Heart left ventricle (tissue), 16 donors: ENCODE measurements at regions of chr15 and their contacts with region 1.

Region 1: DNA sequence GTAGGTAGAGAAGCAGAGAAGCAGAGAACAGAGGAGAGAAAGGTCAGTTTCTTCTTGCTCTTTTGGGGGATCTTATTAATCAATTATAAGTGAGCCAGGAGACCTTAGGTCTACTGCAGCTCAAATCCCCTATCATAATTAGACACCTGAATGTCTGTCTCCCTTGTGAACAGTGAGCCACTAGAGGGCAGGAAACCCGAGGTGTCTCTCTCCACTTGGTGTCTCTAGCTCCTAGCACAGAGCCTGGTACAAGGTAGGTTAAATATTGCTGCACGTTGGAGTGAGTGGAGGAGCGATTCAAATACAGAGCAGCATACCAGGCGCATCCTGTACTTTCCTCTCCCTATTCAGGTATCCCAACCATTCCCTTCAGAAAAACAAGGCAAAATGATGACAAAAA is 2.0 kb upstream of the ST8SIA2 start:
- DNase-seq: no peak
- ATAC-seq: peak in 3 of 4 donors; percentile 47 to 64 (median 60)
- H3K4me3 ChIP-seq: no peak overlapping the region
- H3K27ac ChIP-seq: no peak overlapping the region
- H3K4me1 ChIP-seq: peaks cover 0 to 24% (median 0%) of the 10 kb centered on the region in 12 donors
- H3K27me3 ChIP-seq: peaks cover 9 to 76% (median 25%) of the 10 kb centered on the region in 9 donors
- CTCF ChIP-seq: peak; percentile 8 to 54 (median 34)
- POLR2A ChIP-seq: no peak

Region 2: GRCh38 chr15:92217896-92218295 is 173.7 kb before region 1 on chr15:
- intact Hi-C with region 1: no loop called
- DNase-seq: no peak
- ATAC-seq: no peak
- H3K4me3 ChIP-seq: no peak overlapping the region
- H3K27ac ChIP-seq: no peak overlapping the region
- H3K4me1 ChIP-seq: no peaks in the 10 kb centered on the region
- H3K27me3 ChIP-seq: no peaks in the 10 kb centered on the region
- CTCF ChIP-seq: no peak
- POLR2A ChIP-seq: no peak

Region 3: GRCh38 chr15:92277776-92278175 is 113.9 kb before region 1 on chr15:
- intact Hi-C with region 1: loop called in 1 of 10 experiments (anchors 5 kb)
- DNase-seq: peak in 1 of 5 donors; percentile 19
- ATAC-seq: peak in 3 of 4 donors; percentile 57 to 77 (median 58)
- H3K4me3 ChIP-seq: no peak overlapping the region
- H3K27ac ChIP-seq: no peak overlapping the region
- H3K4me1 ChIP-seq: no peaks in the 10 kb centered on the region
- H3K27me3 ChIP-seq: no peaks in the 10 kb centered on the region
- CTCF ChIP-seq: peak; percentile 13 to 51 (median 36)
- POLR2A ChIP-seq: no peak

Region 4: GRCh38 chr15:92346063-92346462 is 45.6 kb before region 1 on chr15:
- intact Hi-C with region 1: loop called in 1 of 10 experiments (anchors 5 kb)
- DNase-seq: no peak
- ATAC-seq: no peak
- H3K4me3 ChIP-seq: no peak overlapping the region
- H3K27ac ChIP-seq: no peak overlapping the region
- H3K4me1 ChIP-seq: peaks cover 0 to 28% (median 2%) of the 10 kb centered on the region in 12 donors
- H3K27me3 ChIP-seq: peaks cover 0 to 22% (median 0%) of the 10 kb centered on the region in 9 donors
- CTCF ChIP-seq: no peak
- POLR2A ChIP-seq: no peak

Region 5: GRCh38 chr15:92714477-92715401 is 323.1 kb after region 1 on chr15:
- intact Hi-C with region 1: loop called in 2 of 10 experiments (anchors 5 to 10 kb)
- DNase-seq: peak; percentile 69 to 78 (median 75)
- ATAC-seq: peak; percentile 73 to 92 (median 88)
- H3K4me3 ChIP-seq: peak overlapping the region; percentile 33 to 74 (median 62)
- H3K27ac ChIP-seq: peak overlapping the region; percentile 17 to 86 (median 59)
- H3K4me1 ChIP-seq: peaks cover 0 to 9% (median 4%) of the 10 kb centered on the region in 12 donors
- H3K27me3 ChIP-seq: peaks cover 0 to 5% (median 0%) of the 10 kb centered on the region in 9 donors
- CTCF ChIP-seq: peak; percentile 78 to 97 (median 90)
- POLR2A ChIP-seq: no peak